Natural killer cell (primary cell): ENCODE measurements at regions of chr22 and their contacts with region 1.

Region 1: GRCh38 chr22:39117585-39118191 is 20.6 kb downstream of the APOBEC3H start:
- DNase-seq: peak; percentile 71 to 87
- ATAC-seq: peak; percentile 76 to 90 (median 86)
- H3K4me3 ChIP-seq: peak overlapping the region; percentile 2
- H3K4me3 Mint-ChIP-seq: peak overlapping the region; percentile 82
- H3K27ac ChIP-seq: peak overlapping the region; percentile 95
- H3K27ac Mint-ChIP-seq: peak overlapping the region; percentile 94 to 99
- H3K4me1 ChIP-seq: peaks cover 40% of the 10 kb centered on the region
- H3K4me1 Mint-ChIP-seq: peaks cover 61 to 66% of the 10 kb centered on the region in 2 donors
- H3K27me3 ChIP-seq: no peaks in the 10 kb centered on the region
- H3K27me3 Mint-ChIP-seq: no peaks in the 10 kb centered on the region
- CTCF ChIP-seq: peak; percentile 71

Region 2: GRCh38 chr22:37781479-37781911 is 1336.2 kb before region 1 on chr22:
- intact Hi-C with region 1: no loop called
- DNase-seq: no peak
- ATAC-seq: no peak
- H3K4me3 ChIP-seq: no peak overlapping the region
- H3K4me3 Mint-ChIP-seq: no peak overlapping the region
- H3K27ac ChIP-seq: no peak overlapping the region
- H3K27ac Mint-ChIP-seq: no peak overlapping the region
- H3K4me1 ChIP-seq: no peaks in the 10 kb centered on the region
- H3K4me1 Mint-ChIP-seq: no peaks in the 10 kb centered on the region
- H3K27me3 ChIP-seq: no peaks in the 10 kb centered on the region
- H3K27me3 Mint-ChIP-seq: no peaks in the 10 kb centered on the region
- CTCF ChIP-seq: no peak

Region 3: DNA sequence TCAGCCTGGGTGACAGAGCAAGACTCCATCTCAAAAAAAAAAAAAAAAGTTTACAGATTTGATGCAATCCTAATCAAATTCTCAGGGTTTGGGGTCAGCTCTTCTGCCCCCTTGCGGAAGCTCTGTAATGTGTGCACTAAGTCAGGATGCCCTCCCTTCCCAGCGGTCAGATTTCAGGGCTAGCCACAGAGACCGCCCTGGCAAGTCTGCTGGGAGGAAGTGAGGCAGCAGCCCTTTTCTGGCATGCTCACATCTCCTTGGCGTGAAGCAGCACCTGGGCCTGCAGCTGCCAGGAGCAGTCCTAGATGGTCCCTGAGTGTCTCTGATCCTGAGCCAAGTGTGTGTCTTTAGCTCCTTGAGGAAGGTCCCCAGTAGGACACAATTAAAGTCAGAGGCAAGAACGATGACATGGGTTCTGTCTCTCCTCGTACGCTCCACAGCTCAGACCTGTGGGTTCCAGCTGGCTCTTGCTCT is 114.5 kb before region 1 on chr22:
- intact Hi-C with region 1: loop called (anchors 1 kb)
- DNase-seq: peak; percentile 70 to 90
- ATAC-seq: peak; percentile 87 to 95 (median 95)
- H3K4me3 ChIP-seq: no peak overlapping the region
- H3K4me3 Mint-ChIP-seq: peak overlapping the region; percentile 32
- H3K27ac ChIP-seq: peak overlapping the region; percentile 11
- H3K27ac Mint-ChIP-seq: peak overlapping the region in 1 of 2 donors; percentile 59
- H3K4me1 ChIP-seq: peaks cover 14% of the 10 kb centered on the region
- H3K4me1 Mint-ChIP-seq: peaks cover 9 to 16% of the 10 kb centered on the region in 2 donors
- H3K27me3 ChIP-seq: no peaks in the 10 kb centered on the region
- H3K27me3 Mint-ChIP-seq: peaks cover 5% of the 10 kb centered on the region in 2 donors
- CTCF ChIP-seq: peak; percentile 79

Region 4: GRCh38 chr22:39080052-39080762 is 37.5 kb before region 1 on chr22:
- intact Hi-C with region 1: loop called (anchors 1 kb)
- DNase-seq: peak; percentile 65 to 74
- ATAC-seq: peak; percentile 43 to 56 (median 51)
- H3K4me3 ChIP-seq: no peak overlapping the region
- H3K4me3 Mint-ChIP-seq: peak overlapping the region; percentile 99
- H3K27ac ChIP-seq: peak overlapping the region; percentile 76
- H3K27ac Mint-ChIP-seq: peak overlapping the region; percentile 98 to 99
- H3K4me1 ChIP-seq: peaks cover 85% of the 10 kb centered on the region
- H3K4me1 Mint-ChIP-seq: peaks cover 75 to 86% of the 10 kb centered on the region in 2 donors
- H3K27me3 ChIP-seq: no peaks in the 10 kb centered on the region
- H3K27me3 Mint-ChIP-seq: no peaks in the 10 kb centered on the region
- CTCF ChIP-seq: no peak

Region 5: GRCh38 chr22:39090426-39091064 is 27.1 kb before region 1 on chr22:
- intact Hi-C with region 1: loop called (anchors 1 kb)
- DNase-seq: peak; percentile 90 to 94
- ATAC-seq: peak; percentile 67 to 87 (median 77)
- H3K4me3 ChIP-seq: peak overlapping the region; percentile 22
- H3K4me3 Mint-ChIP-seq: peak overlapping the region; percentile 90
- H3K27ac ChIP-seq: peak overlapping the region; percentile 98
- H3K27ac Mint-ChIP-seq: peak overlapping the region; percentile 98 to 99
- H3K4me1 ChIP-seq: peaks cover 97% of the 10 kb centered on the region
- H3K4me1 Mint-ChIP-seq: peaks cover 82 to 90% of the 10 kb centered on the region in 2 donors
- H3K27me3 ChIP-seq: no peaks in the 10 kb centered on the region
- H3K27me3 Mint-ChIP-seq: no peaks in the 10 kb centered on the region
- CTCF ChIP-seq: no peak